ENCODE measurements at regions of chr12 and their contacts with region 1.

Region 1: GRCh38 chr12:57904848-57905811 is 36.2 kb upstream of the ATP23 start:
- DNase-seq: peak; percentile 76 to 84 (median 80)
- H3K4me3 ChIP-seq: no peak overlapping the region
- H3K4me3 Mint-ChIP-seq: peak overlapping the region in 6 of 8 donors; percentile 37 to 74 (median 64)
- H3K27ac ChIP-seq: no peak overlapping the region
- H3K27ac Mint-ChIP-seq: peak overlapping the region; percentile 2 to 86 (median 50)
- H3K4me1 ChIP-seq: peaks cover 3% of the 10 kb centered on the region
- H3K4me1 Mint-ChIP-seq: peaks cover 5 to 9% (median 7%) of the 10 kb centered on the region in 4 donors
- H3K27me3 ChIP-seq: no peaks in the 10 kb centered on the region
- H3K27me3 Mint-ChIP-seq: peaks cover 0 to 3% of the 10 kb centered on the region in 2 donors

Region 2: GRCh38 chr12:57759360-57759980 is 145.7 kb before region 1 on chr12:
- CTCF ChIA-PET with region 1: interaction called, 45 read pairs
- POLR2A ChIA-PET with region 1: interaction called, 8 read pairs
- intact Hi-C with region 1: loop called (anchors 1 kb)
- DNase-seq: peak in 4 of 5 donors; percentile 47 to 65 (median 56)
- H3K4me3 ChIP-seq: no peak overlapping the region
- H3K4me3 Mint-ChIP-seq: peak overlapping the region in 3 of 8 donors; percentile 39 to 70 (median 64)
- H3K27ac ChIP-seq: no peak overlapping the region
- H3K27ac Mint-ChIP-seq: peak overlapping the region in 5 of 7 donors; percentile 32 to 82 (median 79)
- H3K4me1 ChIP-seq: peaks cover 33% of the 10 kb centered on the region
- H3K4me1 Mint-ChIP-seq: peaks cover 25 to 54% (median 35%) of the 10 kb centered on the region in 4 donors
- H3K27me3 ChIP-seq: no peaks in the 10 kb centered on the region
- H3K27me3 Mint-ChIP-seq: peaks cover 3 to 6% of the 10 kb centered on the region in 2 donors

Region 3: GRCh38 chr12:57803319-57803893 is 101.7 kb before region 1 on chr12:
- CTCF ChIA-PET with region 1: interaction called, 125 read pairs
- POLR2A ChIA-PET with region 1: interaction called, 3 read pairs
- intact Hi-C with region 1: loop called (anchors 1 kb)
- DNase-seq: peak in 4 of 5 donors; percentile 13 to 31 (median 26)
- H3K4me3 ChIP-seq: no peak overlapping the region
- H3K4me3 Mint-ChIP-seq: no peak overlapping the region
- H3K27ac ChIP-seq: no peak overlapping the region
- H3K27ac Mint-ChIP-seq: peak overlapping the region in 4 of 7 donors; percentile 22 to 64 (median 33)
- H3K4me1 ChIP-seq: no peaks in the 10 kb centered on the region
- H3K4me1 Mint-ChIP-seq: no peaks in the 10 kb centered on the region
- H3K27me3 ChIP-seq: no peaks in the 10 kb centered on the region
- H3K27me3 Mint-ChIP-seq: no peaks in the 10 kb centered on the region

Region 4: GRCh38 chr12:57836442-57837375 is 68.4 kb before region 1 on chr12:
- CTCF ChIA-PET with region 1: interaction called, 76 read pairs
- POLR2A ChIA-PET with region 1: interaction called, 25 read pairs
- intact Hi-C with region 1: loop called (anchors 1 kb)
- DNase-seq: peak in 4 of 5 donors; percentile 42 to 69 (median 52)
- H3K4me3 ChIP-seq: peak overlapping the region; percentile 6 to 23
- H3K4me3 Mint-ChIP-seq: peak overlapping the region; percentile 41 to 78 (median 67)
- H3K27ac ChIP-seq: peak overlapping the region; percentile 62
- H3K27ac Mint-ChIP-seq: peak overlapping the region; percentile 83 to 95 (median 93)
- H3K4me1 ChIP-seq: peaks cover 99% of the 10 kb centered on the region
- H3K4me1 Mint-ChIP-seq: peaks cover 78 to 99% (median 88%) of the 10 kb centered on the region in 4 donors
- H3K27me3 ChIP-seq: no peaks in the 10 kb centered on the region
- H3K27me3 Mint-ChIP-seq: no peaks in the 10 kb centered on the region

Region 5: DNA sequence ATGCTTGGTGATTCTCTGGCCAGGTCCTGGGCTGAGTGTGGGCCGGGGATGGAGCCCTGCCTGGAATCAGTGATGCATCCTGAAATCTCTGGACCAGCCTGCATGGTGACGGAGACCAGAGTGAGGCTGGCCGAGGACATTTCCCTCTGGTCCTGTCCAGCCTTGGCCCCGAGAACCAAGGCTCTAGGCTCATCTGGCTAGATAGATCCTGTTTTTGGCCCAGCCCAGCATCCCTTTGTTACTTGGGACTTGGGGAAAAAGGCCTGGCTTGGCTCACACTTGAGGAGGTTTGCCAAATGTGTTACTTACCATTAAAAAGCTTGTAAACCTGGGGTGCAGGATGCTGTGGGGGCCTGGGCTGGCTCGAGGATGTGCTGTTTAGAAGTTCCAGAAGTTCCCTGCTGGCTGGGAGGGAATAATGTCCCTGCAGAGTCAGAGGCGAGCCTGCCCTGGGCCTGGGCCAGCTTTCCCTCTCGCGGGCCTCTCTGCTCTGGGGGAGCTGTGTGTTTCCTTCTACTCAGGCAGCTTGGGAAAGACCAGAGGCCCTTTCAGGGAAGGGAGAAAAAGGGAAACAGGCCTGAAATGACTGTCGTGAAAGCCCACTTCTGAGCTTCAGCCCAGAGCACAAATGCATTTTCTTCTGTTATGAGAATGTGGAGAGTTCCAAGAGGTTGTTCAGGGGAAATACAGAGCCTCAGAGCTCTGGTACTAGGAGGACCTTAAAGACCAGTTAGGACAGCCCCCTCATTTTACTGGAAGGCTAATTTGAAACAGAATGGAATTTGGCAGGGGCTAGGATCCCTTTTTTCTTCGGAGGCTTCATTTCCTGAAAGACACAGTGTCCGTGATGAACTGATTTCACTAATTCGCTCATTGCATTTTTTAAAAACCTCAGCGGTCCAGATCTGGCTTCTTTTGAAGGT is 11.4 kb before region 1 on chr12:
- CTCF ChIA-PET with region 1: interaction called, 46 read pairs
- POLR2A ChIA-PET with region 1: interaction called, 20 read pairs
- intact Hi-C with region 1: no loop called
- DNase-seq: no peak
- H3K4me3 ChIP-seq: no peak overlapping the region
- H3K4me3 Mint-ChIP-seq: peak overlapping the region in 6 of 8 donors; percentile 3 to 83 (median 76)
- H3K27ac ChIP-seq: no peak overlapping the region
- H3K27ac Mint-ChIP-seq: peak overlapping the region; percentile 73 to 95 (median 89)
- H3K4me1 ChIP-seq: peaks cover 61% of the 10 kb centered on the region
- H3K4me1 Mint-ChIP-seq: peaks cover 40 to 69% (median 52%) of the 10 kb centered on the region in 4 donors
- H3K27me3 ChIP-seq: no peaks in the 10 kb centered on the region
- H3K27me3 Mint-ChIP-seq: peaks cover 0 to 2% of the 10 kb centered on the region in 2 donors

Measured in CD4-positive, alpha-beta memory T cell (primary cell).